WTC11 (cell line): ENCODE measurements at regions of chr1 and their contacts with region 1.

Region 1: GRCh38 chr1:241998412-241998921 is 431 bp downstream of the MAP1LC3C start:
- DNase-seq: peak; percentile 80
- ATAC-seq: peak; percentile 89
- H3K4me3 Mint-ChIP-seq: peak overlapping the region; percentile 77
- H3K27ac Mint-ChIP-seq: no peak overlapping the region
- H3K4me1 Mint-ChIP-seq: peaks cover 25% of the 10 kb centered on the region
- H3K27me3 Mint-ChIP-seq: peaks cover 5% of the 10 kb centered on the region
- CTCF ChIP-seq: peak; percentile 64

Region 2: DNA sequence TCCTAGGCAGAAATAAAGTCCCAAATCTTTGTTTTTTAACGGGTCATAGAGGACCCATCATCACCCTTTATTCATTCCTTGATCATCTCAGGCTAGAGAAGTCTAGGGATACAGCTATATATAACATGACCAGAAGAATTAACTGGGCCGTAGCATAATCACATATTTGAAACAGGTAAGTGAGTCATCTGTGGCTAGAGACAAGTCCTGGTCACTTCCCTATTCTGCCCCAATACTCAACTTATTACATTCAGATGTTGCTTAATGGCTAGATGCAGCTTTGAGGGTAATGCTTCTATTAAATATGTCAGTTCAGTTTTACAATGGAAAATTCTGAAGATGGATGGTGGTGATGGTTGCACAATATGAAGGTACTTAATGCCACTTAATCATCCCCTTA is 103.5 kb before region 1 on chr1:
- CTCF ChIA-PET with region 1: interaction called, 60 read pairs
- POLR2A ChIA-PET with region 1: no interaction called
- DNase-seq: no peak
- ATAC-seq: no peak
- H3K4me3 Mint-ChIP-seq: no peak overlapping the region
- H3K27ac Mint-ChIP-seq: no peak overlapping the region
- H3K4me1 Mint-ChIP-seq: no peaks in the 10 kb centered on the region
- H3K27me3 Mint-ChIP-seq: no peaks in the 10 kb centered on the region
- CTCF ChIP-seq: no peak

Region 3: DNA sequence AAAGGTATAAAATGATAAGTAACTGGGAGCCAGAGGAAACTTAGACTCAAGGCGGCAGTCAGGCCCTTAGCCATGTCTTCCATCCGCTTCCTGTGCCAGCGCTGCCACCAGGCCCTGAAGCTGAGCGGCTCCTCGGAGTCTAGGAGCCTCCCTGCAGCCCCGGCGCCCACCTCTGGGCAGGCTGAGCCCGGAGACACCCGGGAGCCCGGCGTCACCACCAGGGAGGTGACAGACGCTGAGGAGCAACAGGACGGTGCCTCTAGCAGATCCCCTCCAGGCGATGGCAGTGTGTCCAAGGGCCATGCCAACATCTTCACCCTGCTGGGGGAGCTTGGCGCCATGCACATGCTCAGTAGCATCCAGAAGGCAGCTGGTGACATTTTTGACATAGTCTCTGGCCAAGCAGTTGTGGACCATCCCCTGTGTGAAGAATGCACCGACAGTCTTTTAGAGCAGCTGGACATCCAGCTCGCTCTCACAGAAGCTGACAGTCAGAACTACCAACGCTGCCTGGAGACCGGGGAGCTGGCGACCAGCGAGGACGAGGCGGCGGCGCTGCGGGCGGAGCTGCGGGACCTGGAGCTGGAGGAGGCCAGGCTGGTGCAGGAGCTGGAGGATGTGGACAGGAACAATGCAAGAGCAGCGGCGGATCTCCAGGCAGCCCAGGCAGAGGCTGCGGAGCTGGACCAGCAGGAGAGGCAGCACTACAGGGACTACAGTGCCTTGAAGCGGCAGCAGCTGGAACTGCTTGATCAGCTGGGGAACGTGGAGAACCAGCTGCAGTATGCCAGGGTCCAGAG is 40.6 kb before region 1 on chr1 and contains the start of gene BECN2:
- CTCF ChIA-PET with region 1: interaction called, 10 read pairs
- POLR2A ChIA-PET with region 1: no interaction called
- DNase-seq: peak; percentile 13
- ATAC-seq: peak; percentile 52
- H3K4me3 Mint-ChIP-seq: no peak within 1 kb of the TSS
- H3K27ac Mint-ChIP-seq: no peak within 1 kb of the TSS
- H3K4me1 Mint-ChIP-seq: no peaks in the 10 kb centered on the region
- H3K27me3 Mint-ChIP-seq: no peaks in the 10 kb centered on the region
- CTCF ChIP-seq: no peak
- total RNA-seq, gene BECN2: not detected in 3 replicates

Region 4: DNA sequence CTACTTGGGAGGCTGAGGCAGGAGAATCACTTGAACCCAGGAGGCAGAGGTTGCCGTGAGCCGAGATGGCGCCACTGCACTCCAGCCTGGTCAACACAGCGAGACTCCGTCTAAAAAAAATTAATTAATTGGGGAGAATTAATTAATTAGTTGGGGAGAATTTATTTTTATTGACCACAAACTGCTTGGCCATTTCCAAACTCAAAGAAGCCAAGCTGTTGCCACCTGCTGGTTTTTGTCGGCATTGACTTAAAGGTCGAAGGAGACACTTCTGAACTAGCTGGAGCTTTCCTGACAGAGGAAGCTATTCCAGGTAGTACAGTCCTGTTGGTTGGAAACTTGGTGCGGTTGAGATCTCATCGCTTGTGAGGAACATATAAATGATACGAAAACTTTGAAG is 12.7 kb before region 1 on chr1:
- CTCF ChIA-PET with region 1: interaction called, 37 read pairs
- POLR2A ChIA-PET with region 1: no interaction called
- DNase-seq: peak; percentile 66
- ATAC-seq: peak; percentile 85
- H3K4me3 Mint-ChIP-seq: no peak overlapping the region
- H3K27ac Mint-ChIP-seq: no peak overlapping the region
- H3K4me1 Mint-ChIP-seq: no peaks in the 10 kb centered on the region
- H3K27me3 Mint-ChIP-seq: no peaks in the 10 kb centered on the region
- CTCF ChIP-seq: no peak; the same call in 1 of the 2 replicates

Region 5: GRCh38 chr1:242011894-242012660 is 13.6 kb after region 1 on chr1:
- CTCF ChIA-PET with region 1: interaction called, 47 read pairs
- POLR2A ChIA-PET with region 1: interaction called, 5 read pairs
- DNase-seq: no peak
- ATAC-seq: no peak
- H3K4me3 Mint-ChIP-seq: no peak overlapping the region
- H3K27ac Mint-ChIP-seq: no peak overlapping the region
- H3K4me1 Mint-ChIP-seq: peaks cover 25% of the 10 kb centered on the region
- H3K27me3 Mint-ChIP-seq: no peaks in the 10 kb centered on the region
- CTCF ChIP-seq: no peak

Region 6: GRCh38 chr1:242237051-242237450 is 238.6 kb after region 1 on chr1:
- CTCF ChIA-PET with region 1: no interaction called
- POLR2A ChIA-PET with region 1: no interaction called
- DNase-seq: no peak
- ATAC-seq: no peak
- H3K4me3 Mint-ChIP-seq: no peak overlapping the region
- H3K27ac Mint-ChIP-seq: no peak overlapping the region
- H3K4me1 Mint-ChIP-seq: 0 out of 2 replicates have a peak, but pooled peaks cover 7% of the 10 kb centered on the region
- H3K27me3 Mint-ChIP-seq: no peaks in the 10 kb centered on the region
- CTCF ChIP-seq: no peak